Spleen (tissue), 13 donors: ENCODE measurements at regions of chr1 and their contacts with region 1.

Region 1: GRCh38 chr1:225474986-225475820 is 47.4 kb upstream of the LBR start:
- DNase-seq: peak; percentile 96
- H3K4me3 ChIP-seq: peak overlapping the region in 1 of 8 donors; percentile 45
- H3K27ac ChIP-seq: no peak overlapping the region
- H3K4me1 ChIP-seq: peaks cover 8 to 65% (median 16%) of the 10 kb centered on the region in 6 donors
- H3K27me3 ChIP-seq: no peaks in the 10 kb centered on the region
- CTCF ChIP-seq: peak; percentile 100
- POLR2A ChIP-seq: no peak

Region 2: GRCh38 chr1:225777583-225778336 is 302.6 kb after region 1 on chr1 and contains the start of gene SRP9:
- intact Hi-C with region 1: loop called (anchors 5 kb)
- DNase-seq: peak; percentile 99
- H3K4me3 ChIP-seq: peak within 1 kb of the TSS; percentile 63 to 93 (median 80)
- H3K27ac ChIP-seq: peak within 1 kb of the TSS; percentile 88 to 99 (median 98)
- H3K4me1 ChIP-seq: peaks cover 34 to 87% (median 63%) of the 10 kb centered on the region in 6 donors
- H3K27me3 ChIP-seq: no peaks in the 10 kb centered on the region
- CTCF ChIP-seq: peak; percentile 85 to 97 (median 95)
- POLR2A ChIP-seq: peak in 2 of 3 donors; percentile 17 to 61
- total RNA-seq, gene SRP9: 145 to 229 (median 159) TPM

Region 3: DNA sequence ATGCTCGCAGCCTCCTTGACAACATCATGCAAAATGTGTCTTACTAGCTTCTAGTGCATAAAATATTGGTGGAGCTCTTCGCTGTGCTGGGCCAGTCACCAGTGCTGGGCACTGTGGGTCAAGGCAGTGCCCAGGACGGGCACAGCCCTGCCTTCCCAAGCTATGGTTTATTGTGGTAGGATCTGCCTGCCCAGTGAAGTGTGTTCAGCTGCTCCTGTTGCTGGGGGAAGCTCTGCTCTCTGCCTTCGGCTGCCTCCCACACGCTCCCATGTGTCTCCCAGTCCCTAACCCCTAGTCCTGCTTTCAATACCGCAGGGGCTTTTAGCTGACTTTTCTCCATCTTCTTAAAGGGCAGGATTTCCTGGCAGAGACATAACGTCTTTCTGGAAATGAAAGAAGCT is 350.4 kb after region 1 on chr1:
- intact Hi-C with region 1: no loop called
- DNase-seq: no peak
- H3K4me3 ChIP-seq: no peak overlapping the region
- H3K27ac ChIP-seq: peak overlapping the region in 6 of 8 donors; percentile 2 to 50 (median 32)
- H3K4me1 ChIP-seq: peaks cover 4 to 34% (median 20%) of the 10 kb centered on the region in 6 donors
- H3K27me3 ChIP-seq: no peaks in the 10 kb centered on the region
- CTCF ChIP-seq: no peak
- POLR2A ChIP-seq: no peak

Region 4: DNA sequence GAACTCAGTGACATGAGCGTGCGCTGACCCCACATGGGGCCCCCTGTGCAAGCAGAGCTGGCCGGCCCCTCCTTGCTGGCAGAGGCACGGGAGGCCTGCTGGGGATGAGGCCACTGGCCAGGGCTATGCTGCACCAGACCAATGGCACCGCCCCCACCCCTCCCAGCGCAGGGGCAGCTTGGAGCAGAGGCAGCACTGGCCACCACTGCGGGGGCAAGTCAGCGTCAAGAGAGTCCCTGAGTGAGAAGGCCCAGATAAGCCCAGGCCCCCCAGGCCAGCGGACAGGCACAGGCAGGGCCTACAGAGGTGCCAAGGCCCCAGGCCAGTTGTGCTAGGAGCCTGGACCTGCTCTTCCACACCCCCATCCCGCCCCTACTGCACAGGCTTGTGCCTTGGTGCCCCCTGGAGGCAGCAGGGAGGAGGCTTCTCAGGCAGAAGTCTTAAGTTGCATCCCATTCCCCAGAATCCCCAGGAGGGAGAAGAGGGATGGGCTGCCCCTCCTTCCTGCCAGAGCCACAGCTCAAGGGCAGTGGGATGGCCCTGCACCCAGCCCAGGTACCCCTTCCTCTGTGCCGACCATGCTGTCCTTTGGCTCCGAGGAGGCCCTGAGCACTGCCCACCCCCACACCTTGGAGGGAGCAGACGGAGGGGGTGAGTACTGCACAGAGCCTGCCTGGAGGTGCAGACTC is 370.5 kb after region 1 on chr1:
- intact Hi-C with region 1: loop called (anchors 5 kb)
- DNase-seq: peak; percentile 84
- H3K4me3 ChIP-seq: no peak overlapping the region
- H3K27ac ChIP-seq: peak overlapping the region in 3 of 8 donors; percentile 72 to 90 (median 80)
- H3K4me1 ChIP-seq: peaks cover 22 to 71% (median 40%) of the 10 kb centered on the region in 6 donors
- H3K27me3 ChIP-seq: no peaks in the 10 kb centered on the region
- CTCF ChIP-seq: peak in 10 of 11 experiments; percentile 13 to 71 (median 58)
- POLR2A ChIP-seq: no peak

Region 5: DNA sequence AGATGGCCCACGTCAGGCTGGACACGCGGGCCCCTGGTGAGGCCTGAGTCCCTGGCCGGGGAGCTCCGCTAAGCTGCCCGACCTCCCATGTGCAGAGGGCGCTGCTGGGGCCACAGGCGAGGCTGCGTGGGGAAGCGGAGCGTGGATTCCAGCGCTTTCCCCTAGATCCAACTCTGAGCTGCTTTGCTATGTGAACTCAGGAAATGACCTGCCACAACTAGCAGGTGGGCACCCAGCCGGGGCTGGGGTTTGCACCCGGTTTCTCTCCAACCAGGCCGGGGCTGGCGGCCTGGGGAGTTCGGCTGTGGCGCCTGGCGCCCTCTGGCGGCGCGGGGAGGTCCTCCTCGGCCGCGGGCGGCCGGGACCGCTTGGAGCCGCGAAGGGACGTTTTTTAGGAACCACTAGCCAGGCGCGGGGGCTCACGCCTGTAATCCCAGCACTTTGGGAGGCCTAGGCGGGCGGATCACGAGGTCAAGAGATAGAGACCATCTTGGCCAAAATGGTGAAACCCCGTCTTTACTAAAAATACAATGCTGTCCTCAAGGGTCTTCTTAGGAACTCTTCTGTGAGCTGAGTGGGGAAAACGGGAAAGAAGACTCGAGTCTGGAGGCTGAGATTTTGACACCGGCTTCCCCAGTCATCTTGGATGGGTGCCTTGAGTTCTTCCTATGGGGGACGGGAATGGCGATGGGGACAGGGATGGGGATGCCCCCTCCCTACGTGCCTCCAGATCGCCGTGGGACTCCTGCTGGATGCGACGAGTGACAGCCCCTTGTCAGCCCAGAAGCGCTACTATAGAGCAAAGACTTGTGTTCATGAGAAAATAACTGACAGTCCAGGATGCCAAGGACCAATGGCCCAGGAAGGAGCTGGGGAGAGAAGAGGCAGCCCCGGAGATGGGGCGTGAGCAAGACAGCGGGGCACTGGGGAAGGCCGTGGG is 436.3 kb after region 1 on chr1:
- intact Hi-C with region 1: loop called (anchors 2 kb)
- DNase-seq: peak; percentile 92
- H3K4me3 ChIP-seq: peak overlapping the region in 1 of 8 donors; percentile 3
- H3K27ac ChIP-seq: peak overlapping the region in 2 of 8 donors; percentile 1 to 6
- H3K4me1 ChIP-seq: peaks cover 0 to 26% (median 16%) of the 10 kb centered on the region in 6 donors
- H3K27me3 ChIP-seq: no peaks in the 10 kb centered on the region
- CTCF ChIP-seq: peak; percentile 61 to 98 (median 94)
- POLR2A ChIP-seq: no peak

Region 6: DNA sequence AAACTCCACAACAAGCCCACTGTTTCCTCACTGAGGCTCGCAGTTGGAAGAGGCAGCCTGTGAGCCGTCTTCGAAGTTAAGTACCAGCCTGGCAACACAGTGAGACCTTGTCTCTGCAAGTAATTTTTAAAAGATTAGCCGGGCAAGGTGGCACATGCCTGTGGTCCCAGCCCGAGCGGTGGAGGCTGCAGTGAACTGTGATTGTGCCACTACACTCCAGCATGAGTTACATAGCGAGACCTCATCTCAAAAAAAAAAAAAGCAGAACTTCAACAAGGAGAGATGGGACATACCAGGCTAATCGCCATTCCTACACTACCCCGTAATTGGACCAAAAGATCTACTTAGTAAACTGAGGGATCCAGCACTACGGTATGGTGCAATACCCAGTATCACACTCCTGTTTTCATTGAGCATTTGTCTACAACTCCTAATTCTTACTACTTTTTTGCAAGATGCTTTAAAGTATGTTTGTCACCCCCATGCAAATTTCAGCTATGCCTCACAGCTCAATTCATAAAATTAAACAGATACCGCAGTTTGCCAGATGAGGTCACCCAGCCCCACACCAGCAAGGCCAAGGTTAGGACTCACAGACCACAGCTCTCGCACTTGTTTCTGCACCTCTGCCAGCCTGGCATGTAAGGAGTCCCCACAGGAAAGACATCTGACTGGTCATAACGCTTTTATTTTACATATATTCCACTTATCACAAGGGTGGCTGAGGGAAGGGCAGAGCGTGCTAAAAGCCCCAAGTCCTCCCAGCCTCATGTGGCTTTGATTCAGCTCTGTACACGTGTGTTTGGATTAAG is 502.9 kb after region 1 on chr1:
- intact Hi-C with region 1: loop called (anchors 5 kb)
- DNase-seq: no peak
- H3K4me3 ChIP-seq: no peak overlapping the region
- H3K27ac ChIP-seq: peak overlapping the region in 2 of 8 donors; percentile 2 to 21
- H3K4me1 ChIP-seq: peaks cover 0 to 39% (median 7%) of the 10 kb centered on the region in 6 donors
- H3K27me3 ChIP-seq: no peaks in the 10 kb centered on the region
- CTCF ChIP-seq: peak in 1 of 11 experiments; percentile 14
- POLR2A ChIP-seq: no peak

Region 7: GRCh38 chr1:227094249-227094966 is 1619.2 kb after region 1 on chr1:
- intact Hi-C with region 1: no loop called
- DNase-seq: no peak
- H3K4me3 ChIP-seq: no peak overlapping the region
- H3K27ac ChIP-seq: no peak overlapping the region
- H3K4me1 ChIP-seq: no peaks in the 10 kb centered on the region
- H3K27me3 ChIP-seq: no peaks in the 10 kb centered on the region
- CTCF ChIP-seq: no peak
- POLR2A ChIP-seq: no peak